Transverse colon (tissue), 4 donors: ENCODE measurements at regions of chr19 and their contacts with region 1.

Region 1: DNA sequence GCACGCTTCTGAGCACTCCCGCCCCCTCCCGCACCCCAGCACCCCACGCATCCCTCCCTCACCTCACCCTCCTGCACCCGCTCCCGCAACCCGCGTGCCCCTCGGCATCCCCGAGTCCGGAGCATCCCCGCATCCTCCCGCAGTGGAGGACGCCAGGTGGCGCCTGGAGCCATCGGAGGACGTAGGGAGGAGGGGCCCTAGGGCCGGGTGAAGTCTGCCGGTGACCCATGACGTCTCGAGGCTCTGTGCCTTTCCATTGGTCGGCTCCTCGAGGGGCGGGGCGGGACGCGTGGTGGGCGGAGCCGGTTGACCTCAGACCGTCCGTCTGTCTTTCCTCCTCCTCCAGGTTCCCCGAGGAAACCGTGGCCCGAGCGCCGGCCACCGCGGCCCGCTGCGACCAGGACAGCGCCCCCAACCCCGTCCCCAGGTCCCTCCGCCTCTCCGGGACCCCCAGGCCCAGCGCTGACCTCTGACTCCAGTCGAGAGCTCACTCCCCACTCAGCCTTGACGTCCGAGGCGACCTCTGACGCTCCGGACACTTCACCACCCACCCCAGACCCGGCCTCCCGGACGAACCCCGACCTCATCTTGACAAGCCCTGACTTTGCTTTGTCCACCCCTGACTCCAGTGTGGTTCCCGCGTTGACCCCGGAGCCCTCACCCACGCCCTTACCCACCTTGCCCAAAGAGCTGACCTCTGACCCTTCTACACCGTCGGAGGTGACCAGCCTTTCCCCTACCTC is 19.9 kb downstream of the SBK2 start:
- DNase-seq: peak; percentile 95
- H3K4me3 ChIP-seq: peak overlapping the region; percentile 38 to 56 (median 44)
- H3K27ac ChIP-seq: peak overlapping the region; percentile 81 to 92 (median 88)
- H3K4me1 ChIP-seq: peaks cover 0 to 8% (median 2%) of the 10 kb centered on the region in 4 donors
- H3K27me3 ChIP-seq: peaks cover 7% of the 10 kb centered on the region
- CTCF ChIP-seq: peak; percentile 75 to 97 (median 88)
- EP300 ChIP-seq: no peak
- POLR2A ChIP-seq: peak; percentile 71

Region 2: GRCh38 chr19:54014920-54015560 is 1502.0 kb before region 1 on chr19:
- in situ Hi-C with region 1: no loop called
- intact Hi-C with region 1: loop called (anchors 5 kb)
- DNase-seq: no peak
- H3K4me3 ChIP-seq: no peak overlapping the region
- H3K27ac ChIP-seq: no peak overlapping the region
- H3K4me1 ChIP-seq: no peaks in the 10 kb centered on the region
- H3K27me3 ChIP-seq: peaks cover 36% of the 10 kb centered on the region
- CTCF ChIP-seq: no peak
- EP300 ChIP-seq: no peak
- POLR2A ChIP-seq: no peak

Region 3: GRCh38 chr19:55586976-55587668 is 70.1 kb after region 1 on chr19:
- in situ Hi-C with region 1: no loop called
- intact Hi-C with region 1: loop called (anchors 10 kb)
- DNase-seq: peak; percentile 96
- H3K4me3 ChIP-seq: peak overlapping the region in 3 of 4 donors; percentile 5 to 39 (median 21)
- H3K27ac ChIP-seq: peak overlapping the region in 2 of 4 donors; percentile 51 to 57
- H3K4me1 ChIP-seq: peaks cover 8 to 29% (median 24%) of the 10 kb centered on the region in 4 donors
- H3K27me3 ChIP-seq: peaks cover 5% of the 10 kb centered on the region
- CTCF ChIP-seq: no peak
- EP300 ChIP-seq: no peak
- POLR2A ChIP-seq: no peak

Region 4: DNA sequence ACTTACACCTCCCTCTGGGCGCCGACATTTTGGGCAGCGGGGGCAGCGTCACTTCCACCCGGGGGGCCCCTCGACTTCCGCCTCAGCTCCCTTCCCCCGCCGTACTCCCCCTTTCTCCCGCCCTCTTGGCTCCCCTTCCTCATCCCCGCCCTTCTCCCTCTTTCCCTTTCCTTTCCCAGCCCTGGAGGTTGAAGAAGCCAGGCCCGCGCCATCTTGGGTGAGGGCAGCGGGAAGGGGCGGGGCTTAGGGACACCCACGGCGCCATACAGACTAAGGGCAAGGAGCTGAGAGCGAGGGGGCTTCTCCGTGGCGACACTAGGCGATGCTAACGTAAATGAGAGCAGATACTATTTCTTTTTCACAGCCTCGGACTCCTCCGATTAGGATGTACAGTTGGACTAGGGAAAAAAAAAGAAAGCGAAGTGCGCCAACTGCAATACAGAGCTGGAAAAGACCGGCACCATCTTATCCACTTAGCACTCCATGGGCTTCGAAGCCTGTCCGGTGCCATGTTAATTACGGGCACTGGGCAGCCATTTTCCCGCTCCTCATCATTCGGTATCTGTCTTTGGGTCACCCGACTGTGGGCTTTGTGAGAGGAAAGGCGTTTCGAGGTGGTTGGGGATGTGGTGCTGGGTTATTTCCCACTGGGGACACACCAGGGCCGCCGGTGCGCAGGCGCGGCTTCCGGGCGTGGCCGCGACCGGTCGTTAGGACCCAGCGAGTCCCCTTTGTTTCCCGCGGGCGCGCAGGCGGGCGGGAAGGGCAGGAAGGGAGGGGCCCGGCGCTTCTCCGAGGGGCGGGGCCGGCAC is 82.6 kb after region 1 on chr19 and contains the start of gene FIZ1:
- in situ Hi-C with region 1: loop called in 1 of 4 experiments (anchors 10 kb)
- intact Hi-C with region 1: no loop called
- DNase-seq: peak; percentile 98
- H3K4me3 ChIP-seq: peak within 1 kb of the TSS; percentile 80 to 96 (median 86)
- H3K27ac ChIP-seq: peak within 1 kb of the TSS; percentile 96 to 100 (median 98)
- H3K4me1 ChIP-seq: peaks cover 12 to 22% (median 16%) of the 10 kb centered on the region in 4 donors
- H3K27me3 ChIP-seq: no peaks in the 10 kb centered on the region
- CTCF ChIP-seq: peak in 1 of 5 experiments; percentile 8
- EP300 ChIP-seq: no peak
- POLR2A ChIP-seq: peak; percentile 20
- total RNA-seq, gene FIZ1: 8.5 to 137 (median 18.3) TPM

Region 5: DNA sequence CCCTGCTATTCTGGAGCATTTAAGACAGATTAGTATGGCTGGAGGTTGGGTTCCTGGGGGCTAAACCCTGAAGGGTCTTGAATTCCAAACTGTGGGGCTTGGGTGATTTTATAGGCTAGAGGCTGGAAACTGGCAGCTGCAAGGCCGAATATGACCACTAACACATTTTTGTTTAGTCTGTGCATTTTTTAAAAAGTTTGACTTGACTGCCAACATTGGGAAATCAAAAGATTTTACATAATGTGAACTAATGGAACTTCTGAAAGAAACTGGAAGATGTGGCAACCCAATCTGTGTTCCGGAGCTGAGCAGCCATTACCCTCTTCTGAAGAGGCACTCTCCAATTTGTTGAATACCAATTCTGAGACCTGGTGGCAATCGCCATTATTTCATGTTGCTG is 102.2 kb after region 1 on chr19:
- in situ Hi-C with region 1: loop called in 1 of 4 experiments (anchors 10 kb)
- intact Hi-C with region 1: loop called (anchors 10 kb)
- DNase-seq: no peak
- H3K4me3 ChIP-seq: no peak overlapping the region
- H3K27ac ChIP-seq: no peak overlapping the region
- H3K4me1 ChIP-seq: peaks cover 0 to 8% (median 3%) of the 10 kb centered on the region in 4 donors
- H3K27me3 ChIP-seq: no peaks in the 10 kb centered on the region
- CTCF ChIP-seq: no peak
- EP300 ChIP-seq: no peak
- POLR2A ChIP-seq: no peak

Region 6: DNA sequence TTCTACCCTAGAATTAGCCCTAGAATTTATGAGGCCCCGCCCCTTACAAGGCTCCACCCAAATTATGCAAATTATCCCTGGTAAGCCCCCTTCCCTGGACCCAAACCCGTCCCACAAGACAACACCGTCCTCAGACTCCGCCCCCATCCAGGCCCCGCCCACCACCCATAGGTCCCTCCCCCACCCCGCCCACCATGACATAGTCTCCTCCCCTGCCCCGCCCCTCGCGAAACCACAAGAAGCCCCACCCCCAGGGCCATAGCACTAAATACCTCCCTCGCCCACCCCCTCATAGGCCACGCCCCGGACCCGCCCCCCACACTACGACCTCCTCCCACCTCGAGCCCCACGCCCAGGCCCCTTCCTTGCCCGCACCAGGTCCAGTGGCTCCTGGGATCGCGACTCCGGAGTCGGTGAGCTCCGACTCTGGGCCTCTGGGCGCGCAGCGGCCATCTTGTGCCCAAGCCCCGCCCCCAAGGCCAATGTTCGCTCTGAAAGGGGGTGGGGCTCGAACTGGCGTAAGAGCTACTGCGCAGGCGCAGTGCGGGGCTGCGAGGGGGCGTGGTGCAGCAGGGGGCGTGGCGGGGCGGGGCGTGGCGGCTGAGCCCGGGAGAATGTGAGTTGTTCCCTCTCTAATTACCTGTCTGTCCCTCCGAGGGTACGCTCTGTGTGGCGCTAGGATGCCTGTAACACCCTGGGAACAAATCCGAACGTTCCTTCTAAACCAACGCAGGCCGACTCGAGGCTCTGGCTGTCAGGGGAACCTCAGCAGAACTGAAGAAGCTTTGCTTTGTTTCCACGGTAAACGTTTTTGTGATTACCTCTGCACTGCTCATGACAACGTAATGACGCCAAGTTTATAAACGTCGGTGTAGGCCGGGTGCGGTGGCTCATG is 107.3 kb after region 1 on chr19 and contains the start of gene ZNF784:
- in situ Hi-C with region 1: loop called in 1 of 4 experiments (anchors 10 kb)
- intact Hi-C with region 1: loop called (anchors 10 kb)
- DNase-seq: peak; percentile 95
- H3K4me3 ChIP-seq: peak within 1 kb of the TSS; percentile 42 to 74 (median 61)
- H3K27ac ChIP-seq: peak within 1 kb of the TSS; percentile 90 to 98 (median 94)
- H3K4me1 ChIP-seq: peaks cover 0 to 14% (median 6%) of the 10 kb centered on the region in 4 donors
- H3K27me3 ChIP-seq: no peaks in the 10 kb centered on the region
- CTCF ChIP-seq: no peak
- EP300 ChIP-seq: no peak
- POLR2A ChIP-seq: peak; percentile 77
- total RNA-seq, gene ZNF784: 11.1 to 27.7 (median 14.5) TPM

Region 7: DNA sequence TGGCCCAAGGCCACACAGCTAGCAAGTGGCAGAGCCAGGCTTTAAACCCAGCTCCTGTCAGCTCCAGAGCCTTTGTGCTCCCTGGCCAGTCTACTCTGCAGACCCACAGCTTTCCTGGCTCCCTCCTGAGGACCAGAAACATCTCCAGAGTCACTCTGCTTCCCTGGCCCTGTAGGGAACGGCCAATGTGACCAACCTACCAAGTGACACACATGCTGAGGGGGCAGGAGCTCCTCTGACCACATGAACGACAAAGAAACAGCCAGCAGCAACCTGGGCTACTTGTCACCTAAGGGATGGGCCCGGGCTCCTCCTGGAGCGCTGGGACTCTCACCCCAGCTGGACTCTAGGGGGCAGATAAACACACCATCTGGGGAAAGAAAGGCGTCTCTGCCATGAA is 1304.2 kb after region 1 on chr19:
- in situ Hi-C with region 1: no loop called
- intact Hi-C with region 1: no loop called
- DNase-seq: no peak
- H3K4me3 ChIP-seq: no peak overlapping the region
- H3K27ac ChIP-seq: no peak overlapping the region
- H3K4me1 ChIP-seq: no peaks in the 10 kb centered on the region
- H3K27me3 ChIP-seq: no peaks in the 10 kb centered on the region
- CTCF ChIP-seq: no peak
- EP300 ChIP-seq: no peak
- POLR2A ChIP-seq: no peak